SK-N-SH (cell line): ENCODE measurements at regions of chr15 and their contacts with region 1.

Region 1: GRCh38 chr15:63544258-63545026 is 40.0 kb downstream of the USP3 start:
- DNase-seq: no peak
- H3K4me3 ChIP-seq: no peak overlapping the region
- H3K27ac ChIP-seq: no peak overlapping the region
- H3K4me1 ChIP-seq: no peaks in the 10 kb centered on the region; a peak in 3 of 4 replicates
- H3K27me3 ChIP-seq: no peaks in the 10 kb centered on the region
- CTCF ChIP-seq: no peak
- EP300 ChIP-seq: no peak
- RAD21 ChIP-seq: no peak

Region 2: DNA sequence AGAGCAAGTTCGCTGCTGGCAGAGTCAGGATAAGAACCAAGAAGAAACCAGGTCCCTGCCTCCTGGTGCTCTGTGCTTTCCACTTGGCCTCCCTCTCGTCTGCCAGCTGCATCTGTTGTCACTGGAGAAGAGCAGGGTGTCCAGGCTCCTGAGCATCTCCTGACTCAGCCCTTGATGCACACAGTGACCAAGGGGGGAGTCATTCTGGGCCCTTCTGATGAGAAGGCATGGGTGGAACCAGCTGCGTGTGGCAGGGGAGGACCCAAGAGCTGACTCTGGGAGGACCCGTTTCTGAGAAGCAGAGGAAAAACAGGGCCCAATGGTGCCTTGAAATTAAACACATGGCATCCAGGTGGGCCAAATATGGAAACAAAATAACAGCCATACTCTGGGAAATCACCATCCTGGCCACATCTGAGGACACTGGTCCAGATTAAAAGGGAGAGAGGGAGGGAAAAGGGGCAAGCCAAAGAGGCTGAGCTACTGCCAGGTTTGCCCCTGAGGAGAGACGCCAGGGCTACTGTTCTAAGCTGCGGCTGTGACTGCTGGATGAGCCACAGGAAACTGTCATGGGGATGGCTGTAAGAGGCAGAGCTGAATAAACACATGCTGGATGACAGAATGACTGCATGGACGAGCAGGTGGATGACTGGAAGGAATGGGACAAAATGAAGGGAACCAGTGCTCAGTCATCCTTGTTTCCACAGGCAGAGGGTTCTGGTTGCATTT is 104.7 kb before region 1 on chr15:
- CTCF ChIA-PET with region 1: no interaction called
- POLR2A ChIA-PET with region 1: no interaction called
- DNase-seq: no peak
- H3K4me3 ChIP-seq: no peak overlapping the region
- H3K27ac ChIP-seq: no peak overlapping the region; a peak in 1 of 4 replicates
- H3K4me1 ChIP-seq: peaks cover 13 to 30% of the 10 kb centered on the region in 2 experiments
- H3K27me3 ChIP-seq: no peaks in the 10 kb centered on the region
- CTCF ChIP-seq: no peak
- EP300 ChIP-seq: no peak
- RAD21 ChIP-seq: no peak

Region 3: GRCh38 chr15:63504247-63504978 is 40.0 kb before region 1 on chr15 and contains the start of gene USP3:
- CTCF ChIA-PET with region 1: interaction called, 10 read pairs
- POLR2A ChIA-PET with region 1: no interaction called
- DNase-seq: peak; percentile 98
- H3K4me3 ChIP-seq: peak within 1 kb of the TSS; percentile 90 to 91
- H3K27ac ChIP-seq: peak within 1 kb of the TSS; percentile 84 to 93
- H3K4me1 ChIP-seq: peaks cover 22 to 30% of the 10 kb centered on the region in 2 experiments; a peak in 3 of 4 replicates
- H3K27me3 ChIP-seq: no peaks in the 10 kb centered on the region
- CTCF ChIP-seq: no peak
- EP300 ChIP-seq: no peak
- RAD21 ChIP-seq: peak; percentile 29; the same call in 1 of the 2 replicates
- polyA plus RNA-seq, gene USP3: 9.3 and 10.8 TPM in 2 replicates

Region 4: DNA sequence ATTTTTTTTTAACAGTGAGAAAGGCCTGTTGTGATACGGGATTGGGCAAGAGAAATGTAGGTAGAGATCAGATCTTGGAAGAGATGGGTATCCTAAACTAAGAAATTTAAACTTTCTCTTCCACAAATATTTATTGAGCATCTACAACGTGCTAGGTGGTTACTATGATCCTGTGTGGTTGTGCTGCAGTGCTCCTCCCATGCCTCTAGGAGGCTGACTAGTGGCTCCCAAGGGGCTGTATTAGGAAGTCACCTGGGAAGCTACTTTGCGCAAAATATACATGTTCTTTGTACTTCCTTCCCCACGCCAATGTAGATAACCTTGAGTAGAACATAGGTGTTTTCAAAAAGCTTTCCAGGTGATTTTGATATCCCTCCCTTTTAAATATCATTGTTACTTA is 12.9 kb before region 1 on chr15:
- CTCF ChIA-PET with region 1: interaction called, 20 read pairs
- POLR2A ChIA-PET with region 1: no interaction called
- DNase-seq: no peak
- H3K4me3 ChIP-seq: no peak overlapping the region
- H3K27ac ChIP-seq: no peak overlapping the region
- H3K4me1 ChIP-seq: no peaks in the 10 kb centered on the region
- H3K27me3 ChIP-seq: no peaks in the 10 kb centered on the region
- CTCF ChIP-seq: peak; percentile 38
- EP300 ChIP-seq: no peak
- RAD21 ChIP-seq: no peak

Region 5: DNA sequence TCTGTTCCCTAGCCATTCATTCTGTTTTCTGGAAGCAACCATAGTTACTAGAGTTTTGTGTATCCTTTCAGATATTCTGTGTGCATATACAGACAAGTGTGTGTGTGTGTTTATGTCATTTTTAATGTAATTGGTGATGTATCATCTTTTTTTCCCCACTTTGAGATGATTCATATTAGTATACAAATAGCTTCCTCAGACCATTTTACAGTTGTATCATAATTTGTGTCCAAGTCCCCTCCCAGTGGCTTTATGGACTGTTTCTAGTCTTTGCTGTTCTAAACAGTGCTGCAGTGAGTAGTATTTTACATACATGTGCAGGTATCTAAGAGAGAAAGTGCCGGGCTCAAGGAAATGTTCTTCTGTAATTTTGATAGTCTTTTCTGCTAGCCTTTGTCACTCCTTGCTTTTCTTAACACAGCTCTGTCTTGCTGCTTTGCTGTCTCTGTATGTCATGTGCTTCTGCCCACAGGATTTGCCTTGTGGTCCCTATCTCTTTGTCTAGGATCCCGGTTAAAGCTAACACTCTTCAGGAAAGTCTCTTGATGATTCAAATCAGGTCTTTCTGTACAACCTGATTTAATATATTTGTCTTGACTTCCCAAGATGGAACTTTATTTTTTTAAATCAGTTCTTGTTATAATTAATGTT is 21.2 kb after region 1 on chr15:
- CTCF ChIA-PET with region 1: no interaction called
- POLR2A ChIA-PET with region 1: no interaction called
- DNase-seq: no peak
- H3K4me3 ChIP-seq: no peak overlapping the region
- H3K27ac ChIP-seq: peak overlapping the region in 1 of 2 experiments; percentile 27; a peak in 2 of 4 replicates
- H3K4me1 ChIP-seq: no peaks in the 10 kb centered on the region
- H3K27me3 ChIP-seq: no peaks in the 10 kb centered on the region
- CTCF ChIP-seq: no peak
- EP300 ChIP-seq: no peak
- RAD21 ChIP-seq: no peak